ENCODE measurements at regions of chr16 and their contacts with region 1.

Region 1: DNA sequence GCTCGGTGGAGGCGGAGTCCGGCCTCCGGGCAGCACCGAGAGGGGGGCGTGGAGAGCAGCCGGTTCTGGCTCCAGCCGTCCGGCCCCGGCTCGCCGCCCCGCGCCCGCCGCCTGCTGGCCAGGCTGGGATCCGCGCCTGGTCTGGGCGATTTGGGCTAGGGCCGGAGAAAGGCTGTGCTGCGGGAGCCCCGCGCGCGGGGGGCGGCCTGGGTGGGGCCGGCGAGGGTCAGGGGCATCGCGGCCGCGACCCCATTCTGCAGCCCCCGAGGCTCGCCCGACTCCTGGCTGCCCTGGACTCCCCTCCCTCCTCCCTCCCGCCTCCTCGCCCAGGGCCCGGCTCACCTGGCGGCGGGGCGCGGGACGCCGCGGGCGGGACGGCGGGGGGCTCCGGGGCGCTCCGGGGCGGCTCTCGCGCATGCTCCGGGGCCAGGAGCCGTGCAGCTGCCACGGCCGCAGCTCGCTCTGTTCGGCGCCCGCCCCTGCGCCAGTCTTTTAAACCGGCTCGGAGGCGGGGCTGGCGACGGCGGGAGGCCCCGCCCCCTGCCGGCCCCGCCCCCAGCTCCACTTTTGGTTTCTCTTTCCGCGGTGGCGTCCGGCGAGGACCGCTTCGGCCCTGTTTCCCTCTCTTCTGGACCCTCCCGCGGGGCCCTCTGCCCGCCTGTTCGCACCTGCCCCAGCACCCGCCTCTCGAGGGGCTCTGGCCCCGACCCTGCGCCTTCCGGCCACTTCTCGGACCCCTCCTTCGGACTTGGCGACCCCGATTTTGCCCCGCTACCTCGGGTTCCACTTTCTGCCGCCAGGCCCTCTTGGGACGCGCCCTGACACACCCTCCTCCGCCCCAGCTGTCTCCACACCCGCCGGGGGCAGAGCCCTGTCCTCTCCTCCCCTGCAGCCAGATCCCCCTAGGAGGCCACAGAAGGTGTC is at the start of gene SOCS1:
- DNase-seq: peak; percentile 80 to 90 (median 85)
- H3K4me3 ChIP-seq: peak within 1 kb of the TSS; percentile 83
- H3K4me3 Mint-ChIP-seq: peak within 1 kb of the TSS; percentile 95 to 100 (median 97)
- H3K27ac ChIP-seq: peak within 1 kb of the TSS; percentile 80
- H3K27ac Mint-ChIP-seq: peak within 1 kb of the TSS; percentile 92 to 100 (median 96)
- H3K4me1 ChIP-seq: peaks cover 60% of the 10 kb centered on the region
- H3K4me1 Mint-ChIP-seq: peaks cover 50 to 70% (median 51%) of the 10 kb centered on the region in 3 donors
- H3K27me3 ChIP-seq: no peaks in the 10 kb centered on the region
- H3K27me3 Mint-ChIP-seq: peaks cover 0 to 7% of the 10 kb centered on the region in 2 donors
- total RNA-seq, gene SOCS1: 128 to 144 TPM

Region 2: GRCh38 chr16:10964039-10964890 is 291.7 kb before region 1 on chr16:
- CTCF ChIA-PET with region 1: interaction called, 46 read pairs
- POLR2A ChIA-PET with region 1: interaction called, 18 read pairs
- DNase-seq: peak; percentile 67 to 84 (median 76)
- H3K4me3 ChIP-seq: peak overlapping the region; percentile 37
- H3K4me3 Mint-ChIP-seq: peak overlapping the region in 6 of 7 donors; percentile 59 to 86 (median 66)
- H3K27ac ChIP-seq: no peak overlapping the region
- H3K27ac Mint-ChIP-seq: peak overlapping the region; percentile 13 to 89 (median 78)
- H3K4me1 ChIP-seq: peaks cover 21% of the 10 kb centered on the region
- H3K4me1 Mint-ChIP-seq: peaks cover 16 to 27% (median 24%) of the 10 kb centered on the region in 3 donors
- H3K27me3 ChIP-seq: no peaks in the 10 kb centered on the region
- H3K27me3 Mint-ChIP-seq: no peaks in the 10 kb centered on the region

Region 3: DNA sequence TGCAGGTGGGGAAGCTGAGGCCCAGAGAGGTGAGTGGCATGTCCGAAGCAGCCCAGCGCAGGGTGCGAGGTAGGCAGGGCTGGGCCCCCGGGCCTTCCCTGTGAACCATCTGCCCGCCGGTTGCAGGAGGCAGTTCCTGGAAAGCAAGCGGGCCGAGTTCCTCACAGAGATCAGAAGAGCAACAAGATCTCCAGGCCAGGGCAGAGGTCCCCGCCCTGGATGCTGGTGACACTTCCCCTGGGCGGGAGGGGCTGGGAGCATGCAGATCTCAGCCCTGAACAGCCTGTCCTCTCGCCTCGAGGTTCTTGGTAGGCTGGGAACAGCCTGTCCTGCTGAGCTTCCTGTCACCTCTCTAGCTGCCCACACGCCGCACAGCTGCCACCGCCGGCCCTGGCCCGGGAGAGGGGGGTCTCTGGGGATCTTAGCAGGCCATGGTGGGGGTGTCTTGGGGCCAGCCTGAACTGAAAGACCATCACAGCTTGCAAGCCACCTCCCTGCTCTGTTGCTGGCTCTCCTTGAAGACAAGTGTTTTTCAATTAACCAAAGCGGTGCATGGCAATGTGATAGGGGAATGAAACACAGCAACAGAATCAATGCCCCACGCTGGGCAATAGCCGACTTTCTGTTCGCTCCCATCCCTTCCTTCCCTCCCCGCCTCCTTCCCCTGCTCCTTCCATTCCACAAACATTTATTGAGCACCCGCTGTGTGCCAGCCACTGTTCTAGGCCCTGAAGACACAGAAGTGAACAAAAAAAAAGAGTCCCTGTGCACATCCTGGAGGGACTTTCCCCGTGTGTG is 31.7 kb before region 1 on chr16:
- CTCF ChIA-PET with region 1: interaction called, 45 read pairs
- POLR2A ChIA-PET with region 1: interaction called, 74 read pairs
- DNase-seq: peak; percentile 40 to 74 (median 56)
- H3K4me3 ChIP-seq: peak overlapping the region; percentile 52
- H3K4me3 Mint-ChIP-seq: peak overlapping the region; percentile 77 to 92 (median 81)
- H3K27ac ChIP-seq: peak overlapping the region; percentile 76
- H3K27ac Mint-ChIP-seq: peak overlapping the region; percentile 94 to 98 (median 96)
- H3K4me1 ChIP-seq: peaks cover 39% of the 10 kb centered on the region
- H3K4me1 Mint-ChIP-seq: peaks cover 36 to 42% (median 38%) of the 10 kb centered on the region in 3 donors
- H3K27me3 ChIP-seq: no peaks in the 10 kb centered on the region
- H3K27me3 Mint-ChIP-seq: no peaks in the 10 kb centered on the region

Region 4: DNA sequence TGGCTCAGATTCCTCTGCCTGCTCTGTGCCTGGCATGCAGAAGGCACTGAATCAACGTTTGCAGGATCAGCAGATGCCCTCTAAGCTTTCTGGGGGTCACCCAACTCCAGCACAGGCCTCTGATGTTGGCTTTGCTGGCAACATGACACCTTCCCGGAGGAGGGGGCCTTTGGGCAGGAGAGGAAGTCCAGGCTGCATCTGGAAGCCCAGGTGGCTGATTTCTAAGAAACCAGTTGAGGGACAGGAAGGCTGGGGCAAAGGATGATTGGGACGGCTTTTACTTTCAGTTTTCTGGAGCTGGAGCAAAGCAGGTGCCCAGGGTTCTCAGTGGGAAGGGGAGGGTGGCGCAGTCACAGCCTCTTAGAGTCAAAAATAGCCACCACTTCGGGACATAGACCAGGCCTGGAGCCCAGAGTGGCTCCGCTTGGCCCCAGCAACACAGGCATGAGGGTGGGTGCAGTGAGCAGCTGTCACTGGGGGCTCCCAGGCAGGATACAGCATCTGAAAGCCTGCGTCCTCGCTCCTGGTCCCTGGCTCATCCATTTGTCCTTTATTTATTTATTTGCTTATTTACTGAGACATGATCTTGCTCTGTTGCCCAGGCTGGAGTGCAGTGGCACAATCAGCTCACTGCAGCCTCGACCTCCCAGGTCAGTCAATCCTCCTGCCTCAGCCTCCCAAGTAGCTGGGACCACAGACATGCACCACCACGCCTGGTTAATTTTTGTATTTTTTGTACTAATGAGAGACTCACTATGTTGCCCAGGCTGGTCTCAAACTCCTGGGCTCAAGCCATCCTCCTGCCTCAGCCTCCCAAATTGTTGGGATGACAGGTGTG is 15.1 kb before region 1 on chr16:
- CTCF ChIA-PET with region 1: interaction called, 16 read pairs
- POLR2A ChIA-PET with region 1: interaction called, 10 read pairs
- DNase-seq: no peak
- H3K4me3 ChIP-seq: no peak overlapping the region
- H3K4me3 Mint-ChIP-seq: peak overlapping the region in 5 of 7 donors; percentile 8 to 53 (median 41)
- H3K27ac ChIP-seq: no peak overlapping the region
- H3K27ac Mint-ChIP-seq: peak overlapping the region in 4 of 8 donors; percentile 26 to 84 (median 34)
- H3K4me1 ChIP-seq: peaks cover 13% of the 10 kb centered on the region
- H3K4me1 Mint-ChIP-seq: peaks cover 4 to 24% (median 7%) of the 10 kb centered on the region in 3 donors
- H3K27me3 ChIP-seq: no peaks in the 10 kb centered on the region
- H3K27me3 Mint-ChIP-seq: peaks cover 0 to 1% of the 10 kb centered on the region in 2 donors

Region 5: GRCh38 chr16:11297492-11298142 is 41.6 kb after region 1 on chr16:
- CTCF ChIA-PET with region 1: interaction called, 18 read pairs
- POLR2A ChIA-PET with region 1: interaction called, 6 read pairs
- DNase-seq: peak; percentile 46 to 80 (median 69)
- H3K4me3 ChIP-seq: peak overlapping the region; percentile 15
- H3K4me3 Mint-ChIP-seq: peak overlapping the region in 6 of 7 donors; percentile 65 to 86 (median 72)
- H3K27ac ChIP-seq: peak overlapping the region; percentile 6
- H3K27ac Mint-ChIP-seq: peak overlapping the region in 5 of 8 donors; percentile 37 to 87 (median 42)
- H3K4me1 ChIP-seq: peaks cover 22% of the 10 kb centered on the region
- H3K4me1 Mint-ChIP-seq: peaks cover 12 to 24% (median 20%) of the 10 kb centered on the region in 3 donors
- H3K27me3 ChIP-seq: no peaks in the 10 kb centered on the region
- H3K27me3 Mint-ChIP-seq: peaks cover 7 to 13% of the 10 kb centered on the region in 2 donors

Measured in CD8-positive, alpha-beta memory T cell (primary cell).